Activated CD8-positive, alpha-beta T cell treated with anti-CD3 and anti-CD28 coated beads, Interleukin-2, amount 10 ng/mL, durations not matched to agents 7 days and 5 days (primary cell): ENCODE measurements at regions of chr14 and their contacts with region 1.

Region 1: GRCh38 chr14:50060871-50061663 is 55.3 kb downstream of the VCPKMT start:
- DNase-seq: peak; percentile 70
- ATAC-seq: peak; percentile 23
- H3K4me3 Mint-ChIP-seq: peak overlapping the region; percentile 95
- H3K27ac Mint-ChIP-seq: peak overlapping the region; percentile 99
- H3K4me1 Mint-ChIP-seq: peaks cover 94% of the 10 kb centered on the region
- H3K27me3 Mint-ChIP-seq: no peaks in the 10 kb centered on the region

Region 2: GRCh38 chr14:49867831-49868723 is 193.0 kb before region 1 on chr14:
- CTCF ChIA-PET with region 1: interaction called, 54 read pairs
- POLR2A ChIA-PET with region 1: interaction called, 68 read pairs
- DNase-seq: peak; percentile 99
- ATAC-seq: peak; percentile 91
- H3K4me3 Mint-ChIP-seq: peak overlapping the region; percentile 91
- H3K27ac Mint-ChIP-seq: peak overlapping the region; percentile 96
- H3K4me1 Mint-ChIP-seq: peaks cover 21% of the 10 kb centered on the region
- H3K27me3 Mint-ChIP-seq: no peaks in the 10 kb centered on the region

Region 3: DNA sequence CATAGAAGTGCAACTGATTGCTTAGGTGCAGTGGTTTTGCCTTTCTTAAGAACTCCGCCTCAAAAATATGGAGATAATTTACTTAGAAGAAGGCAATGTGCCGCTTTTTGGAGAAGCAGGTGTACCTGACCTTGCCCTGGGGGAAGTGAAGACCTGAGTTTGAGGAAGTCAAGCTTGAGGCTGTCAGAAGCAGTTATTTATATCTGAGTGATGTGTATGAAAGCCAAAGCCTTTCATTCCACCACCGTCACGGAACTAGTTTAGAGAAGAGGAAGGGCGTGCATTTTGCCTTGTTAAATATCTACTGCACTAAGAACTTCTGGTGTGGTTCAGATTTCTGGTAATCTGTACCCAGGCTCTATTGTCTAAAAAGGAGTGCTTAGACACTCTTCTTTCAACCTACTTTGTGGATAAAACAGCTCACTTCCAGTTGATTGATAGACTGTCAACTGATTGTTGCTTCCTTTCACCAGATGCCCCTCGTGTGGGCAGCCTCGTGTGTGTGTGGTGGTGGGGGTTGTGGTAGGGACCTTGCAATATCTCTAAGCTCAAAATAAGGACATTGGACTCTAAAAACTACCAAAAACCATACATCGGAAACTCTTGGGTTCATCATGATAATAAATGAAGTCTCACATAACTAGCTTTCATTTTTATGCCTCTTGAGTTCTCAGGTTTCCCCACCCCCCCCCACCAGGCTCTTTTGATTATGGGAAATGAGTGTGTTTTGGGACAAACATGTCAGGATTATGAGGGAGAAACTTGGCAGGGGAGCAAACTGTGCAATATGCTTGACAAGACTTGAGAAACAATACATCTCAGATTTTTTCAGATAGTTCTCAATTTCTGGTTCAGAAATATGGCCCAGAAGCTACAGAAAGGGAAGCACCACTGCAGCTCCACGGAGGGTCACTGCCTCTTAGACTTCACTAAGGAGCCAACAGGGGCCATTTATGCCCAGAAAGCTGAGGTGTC is 89.6 kb before region 1 on chr14:
- CTCF ChIA-PET with region 1: interaction called, 15 read pairs
- POLR2A ChIA-PET with region 1: interaction called, 47 read pairs
- DNase-seq: peak; percentile 79
- ATAC-seq: peak; percentile 79
- H3K4me3 Mint-ChIP-seq: peak overlapping the region; percentile 70
- H3K27ac Mint-ChIP-seq: peak overlapping the region; percentile 96
- H3K4me1 Mint-ChIP-seq: peaks cover 65% of the 10 kb centered on the region
- H3K27me3 Mint-ChIP-seq: no peaks in the 10 kb centered on the region

Region 4: GRCh38 chr14:50038398-50039119 is 22.5 kb before region 1 on chr14:
- CTCF ChIA-PET with region 1: interaction called, 38 read pairs
- POLR2A ChIA-PET with region 1: interaction called, 78 read pairs
- DNase-seq: peak; percentile 44
- ATAC-seq: peak; percentile 22
- H3K4me3 Mint-ChIP-seq: peak overlapping the region; percentile 74
- H3K27ac Mint-ChIP-seq: peak overlapping the region; percentile 98
- H3K4me1 Mint-ChIP-seq: peaks cover 85% of the 10 kb centered on the region
- H3K27me3 Mint-ChIP-seq: no peaks in the 10 kb centered on the region

Region 5: GRCh38 chr14:50091240-50091913 is 30.3 kb after region 1 on chr14:
- CTCF ChIA-PET with region 1: interaction called, 60 read pairs
- POLR2A ChIA-PET with region 1: interaction called, 56 read pairs
- DNase-seq: no peak
- ATAC-seq: no peak
- H3K4me3 Mint-ChIP-seq: no peak overlapping the region
- H3K27ac Mint-ChIP-seq: peak overlapping the region; percentile 62
- H3K4me1 Mint-ChIP-seq: peaks cover 91% of the 10 kb centered on the region
- H3K27me3 Mint-ChIP-seq: no peaks in the 10 kb centered on the region

Region 6: DNA sequence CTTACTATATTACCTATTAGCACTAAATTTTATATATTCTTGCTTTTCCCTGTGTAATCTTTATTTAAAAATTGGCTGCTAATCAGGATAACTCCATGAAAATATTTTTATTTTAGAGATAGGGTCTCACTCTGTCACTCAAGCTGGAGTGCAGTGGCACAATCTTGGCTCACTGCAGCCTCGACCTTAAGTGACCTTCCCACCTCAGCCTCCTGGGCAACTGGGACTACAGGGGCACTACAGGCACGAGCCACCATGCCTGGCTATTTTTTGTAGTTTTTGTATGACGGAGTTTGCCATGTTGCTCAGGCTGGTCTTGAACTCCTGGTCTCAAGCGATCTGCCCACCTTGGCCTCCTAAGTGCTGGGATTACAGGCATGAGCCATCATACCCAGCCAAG is 87.7 kb after region 1 on chr14:
- CTCF ChIA-PET with region 1: no interaction called
- POLR2A ChIA-PET with region 1: no interaction called
- DNase-seq: no peak
- ATAC-seq: no peak
- H3K4me3 Mint-ChIP-seq: no peak overlapping the region
- H3K27ac Mint-ChIP-seq: no peak overlapping the region
- H3K4me1 Mint-ChIP-seq: no peaks in the 10 kb centered on the region
- H3K27me3 Mint-ChIP-seq: no peaks in the 10 kb centered on the region